Panc1 (cell line): ENCODE measurements at regions of chr17 and their contacts with region 1.

Region 1: GRCh38 chr17:78924481-78925151 is 571 bp downstream of the TIMP2 start:
- DNase-seq: no peak
- ATAC-seq: peak; percentile 50
- H3K4me3 ChIP-seq: peak overlapping the region; percentile 50 to 65
- H3K27ac ChIP-seq: peak overlapping the region; percentile 26; the same call in 1 of the 2 replicates
- H3K4me1 ChIP-seq: peaks cover 25% of the 10 kb centered on the region
- H3K27me3 ChIP-seq: no peaks in the 10 kb centered on the region
- CTCF ChIP-seq: no peak

Region 2: DNA sequence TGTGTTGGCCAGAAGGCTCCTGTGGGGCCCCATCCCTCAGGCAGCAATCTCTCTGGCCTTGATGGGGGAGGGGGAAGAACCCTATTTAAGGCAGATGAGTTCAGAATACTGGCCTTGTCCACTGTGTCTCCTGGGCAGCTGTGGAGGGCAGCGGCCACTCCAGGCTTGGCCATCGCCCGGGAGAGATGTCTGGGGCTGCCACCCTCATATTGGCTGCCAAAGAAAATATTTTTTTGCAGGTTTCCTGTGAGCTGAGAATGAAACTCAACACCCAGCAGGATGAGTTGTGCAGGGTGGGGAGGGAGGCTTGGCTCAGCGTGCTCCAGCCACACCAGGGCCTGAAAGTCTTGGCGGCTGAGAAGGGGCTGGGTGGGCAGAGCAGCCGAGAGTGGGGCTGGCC is 15.0 kb after region 1 on chr17:
- CTCF ChIA-PET with region 1: no interaction called
- POLR2A ChIA-PET with region 1: no interaction called
- in situ Hi-C with region 1: no loop called
- intact Hi-C with region 1: no loop called
- DNase-seq: no peak
- ATAC-seq: no peak
- H3K4me3 ChIP-seq: no peak overlapping the region
- H3K27ac ChIP-seq: no peak overlapping the region
- H3K4me1 ChIP-seq: peaks cover 11% of the 10 kb centered on the region
- H3K27me3 ChIP-seq: no peaks in the 10 kb centered on the region
- CTCF ChIP-seq: no peak

Region 3: GRCh38 chr17:78962345-78962983 is 37.8 kb after region 1 on chr17:
- CTCF ChIA-PET with region 1: interaction called, 13 read pairs
- POLR2A ChIA-PET with region 1: no interaction called
- in situ Hi-C with region 1: no loop called
- intact Hi-C with region 1: no loop called
- DNase-seq: no peak
- ATAC-seq: peak; percentile 55; the same call in 1 of the 2 replicates
- H3K4me3 ChIP-seq: no peak overlapping the region
- H3K27ac ChIP-seq: no peak overlapping the region
- H3K4me1 ChIP-seq: 0 out of 2 replicates have a peak, but pooled peaks cover 2% of the 10 kb centered on the region
- H3K27me3 ChIP-seq: no peaks in the 10 kb centered on the region
- CTCF ChIP-seq: no peak

Region 4: DNA sequence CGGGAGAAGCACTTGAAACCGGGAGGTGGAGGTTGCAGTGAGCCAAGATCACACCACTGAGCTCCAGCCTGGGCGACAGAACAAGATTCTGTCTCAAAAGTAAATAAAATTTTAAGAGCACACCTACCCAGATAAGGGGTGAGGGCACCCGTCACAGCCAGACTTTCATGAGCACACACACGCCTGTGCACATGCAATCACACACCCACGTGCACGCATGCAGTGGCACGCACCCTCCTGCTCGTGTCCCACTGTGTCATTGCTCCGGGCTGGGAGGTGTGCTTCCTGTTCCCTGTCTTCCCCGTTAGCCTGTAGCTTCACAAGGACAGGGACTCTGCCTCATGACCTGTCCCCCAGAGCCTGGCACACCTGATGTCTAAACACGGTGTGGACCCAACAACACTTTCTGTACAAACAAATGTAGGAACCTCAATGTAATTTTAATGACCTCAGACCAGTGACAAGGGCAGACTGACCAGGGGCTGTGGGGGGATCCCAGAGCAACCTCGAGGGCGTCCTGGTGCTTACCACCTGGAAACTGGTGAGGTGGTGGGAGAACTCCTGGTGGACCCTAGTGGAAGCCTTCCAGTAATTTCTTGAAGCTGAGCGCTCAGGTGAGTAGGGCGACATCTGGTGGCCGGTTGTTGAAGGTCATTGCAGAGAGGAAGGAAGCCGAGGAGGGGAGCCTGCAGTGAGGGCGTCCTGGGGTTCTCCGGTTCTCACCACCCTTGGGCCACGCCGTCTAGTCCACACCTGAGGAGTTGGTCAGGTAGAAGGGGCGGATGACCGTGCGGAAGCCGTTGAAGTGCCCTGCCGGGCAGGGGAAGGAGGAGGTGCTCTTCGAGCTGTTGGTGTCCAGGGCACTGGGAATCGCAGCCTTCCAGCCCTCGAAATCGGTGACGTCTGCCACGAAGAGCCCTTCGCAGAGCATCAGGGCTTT is 46.5 kb after region 1 on chr17:
- CTCF ChIA-PET with region 1: interaction called, 11 read pairs
- POLR2A ChIA-PET with region 1: no interaction called
- in situ Hi-C with region 1: no loop called
- intact Hi-C with region 1: no loop called
- DNase-seq: no peak
- ATAC-seq: peak; percentile 70
- H3K4me3 ChIP-seq: no peak overlapping the region
- H3K27ac ChIP-seq: peak overlapping the region; percentile 34; the same call in 1 of the 2 replicates
- H3K4me1 ChIP-seq: peaks cover 5% of the 10 kb centered on the region; the same call in 1 of the 2 replicates
- H3K27me3 ChIP-seq: no peaks in the 10 kb centered on the region
- CTCF ChIP-seq: peak; percentile 95